Caco-2 (cell line): ENCODE measurements at regions of chr17 and their contacts with region 1.

Region 1: GRCh38 chr17:48259694-48260291 is 152.2 kb downstream of the SNX11 start:
- DNase-seq: peak in 1 of 2 experiments; percentile 70
- H3K4me3 ChIP-seq: no peak overlapping the region
- H3K4me3 Mint-ChIP-seq: no peak overlapping the region
- H3K27ac Mint-ChIP-seq: no peak overlapping the region
- H3K4me1 ChIP-seq: peaks cover 33% of the 10 kb centered on the region
- H3K4me1 Mint-ChIP-seq: peaks cover 34% of the 10 kb centered on the region
- H3K27me3 ChIP-seq: no peaks in the 10 kb centered on the region
- H3K27me3 Mint-ChIP-seq: no peaks in the 10 kb centered on the region
- CTCF ChIP-seq: peak; percentile 95 to 97

Region 2: DNA sequence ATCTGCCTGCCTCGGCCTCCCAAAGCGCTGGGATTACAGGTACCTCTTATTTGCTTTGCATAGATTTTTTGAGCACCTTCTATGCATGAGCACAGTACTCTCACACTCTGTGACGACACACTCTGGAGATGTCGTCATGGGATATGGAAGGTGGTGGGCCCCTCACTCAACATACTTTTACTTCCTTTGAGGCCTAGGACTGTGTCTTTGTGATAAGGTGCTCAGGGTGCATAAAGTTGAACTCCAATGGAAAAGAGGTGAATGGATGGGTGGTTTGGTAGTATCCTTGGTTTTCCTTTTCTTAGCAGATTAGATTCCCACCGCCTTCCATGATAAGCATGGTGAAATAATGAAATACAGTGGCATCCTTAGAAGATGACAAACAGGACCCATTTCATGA is 294.9 kb before region 1 on chr17:
- CTCF ChIA-PET with region 1: no interaction called
- POLR2A ChIA-PET with region 1: no interaction called
- intact Hi-C with region 1: no loop called
- DNase-seq: no peak
- H3K4me3 ChIP-seq: no peak overlapping the region
- H3K4me3 Mint-ChIP-seq: no peak overlapping the region
- H3K27ac Mint-ChIP-seq: peak overlapping the region; percentile 73
- H3K4me1 ChIP-seq: peaks cover 72% of the 10 kb centered on the region
- H3K4me1 Mint-ChIP-seq: peaks cover 48% of the 10 kb centered on the region
- H3K27me3 ChIP-seq: no peaks in the 10 kb centered on the region
- H3K27me3 Mint-ChIP-seq: no peaks in the 10 kb centered on the region
- CTCF ChIP-seq: no peak

Region 3: DNA sequence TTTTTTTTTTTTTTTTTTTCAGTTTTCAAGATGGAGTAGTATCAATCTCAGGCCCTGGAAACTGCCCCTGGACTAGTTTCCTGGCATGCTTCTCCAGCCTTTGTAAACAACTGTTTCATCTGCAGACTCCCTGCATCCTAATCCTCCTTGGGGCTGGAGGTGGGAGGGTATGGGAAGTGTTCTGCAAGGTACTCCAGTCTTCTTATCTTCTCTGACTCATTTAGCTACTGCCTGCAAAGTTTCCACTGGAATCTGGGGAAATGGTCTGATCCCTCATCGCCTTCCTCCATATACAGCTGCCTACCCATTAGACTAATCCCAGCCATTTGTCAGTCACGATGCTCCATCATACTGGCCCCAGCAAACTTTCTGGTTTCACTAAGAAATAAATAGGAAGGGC is 243.7 kb before region 1 on chr17:
- CTCF ChIA-PET with region 1: no interaction called
- POLR2A ChIA-PET with region 1: no interaction called
- intact Hi-C with region 1: no loop called
- DNase-seq: no peak
- H3K4me3 ChIP-seq: no peak overlapping the region
- H3K4me3 Mint-ChIP-seq: no peak overlapping the region
- H3K27ac Mint-ChIP-seq: no peak overlapping the region
- H3K4me1 ChIP-seq: no peaks in the 10 kb centered on the region
- H3K4me1 Mint-ChIP-seq: no peaks in the 10 kb centered on the region
- H3K27me3 ChIP-seq: no peaks in the 10 kb centered on the region
- H3K27me3 Mint-ChIP-seq: peaks cover 7% of the 10 kb centered on the region
- CTCF ChIP-seq: no peak

Region 4: GRCh38 chr17:48181653-48182052 is 78.1 kb before region 1 on chr17:
- CTCF ChIA-PET with region 1: interaction called, 5 read pairs
- POLR2A ChIA-PET with region 1: no interaction called
- intact Hi-C with region 1: loop called (anchors 1 kb)
- DNase-seq: peak; percentile 67 to 76
- H3K4me3 ChIP-seq: no peak overlapping the region
- H3K4me3 Mint-ChIP-seq: no peak overlapping the region
- H3K27ac Mint-ChIP-seq: no peak overlapping the region
- H3K4me1 ChIP-seq: no peaks in the 10 kb centered on the region
- H3K4me1 Mint-ChIP-seq: no peaks in the 10 kb centered on the region
- H3K27me3 ChIP-seq: 0 out of 2 replicates have a peak, but pooled peaks cover 2% of the 10 kb centered on the region
- H3K27me3 Mint-ChIP-seq: peaks cover 18% of the 10 kb centered on the region
- CTCF ChIP-seq: peak; percentile 77 to 95

Region 5: DNA sequence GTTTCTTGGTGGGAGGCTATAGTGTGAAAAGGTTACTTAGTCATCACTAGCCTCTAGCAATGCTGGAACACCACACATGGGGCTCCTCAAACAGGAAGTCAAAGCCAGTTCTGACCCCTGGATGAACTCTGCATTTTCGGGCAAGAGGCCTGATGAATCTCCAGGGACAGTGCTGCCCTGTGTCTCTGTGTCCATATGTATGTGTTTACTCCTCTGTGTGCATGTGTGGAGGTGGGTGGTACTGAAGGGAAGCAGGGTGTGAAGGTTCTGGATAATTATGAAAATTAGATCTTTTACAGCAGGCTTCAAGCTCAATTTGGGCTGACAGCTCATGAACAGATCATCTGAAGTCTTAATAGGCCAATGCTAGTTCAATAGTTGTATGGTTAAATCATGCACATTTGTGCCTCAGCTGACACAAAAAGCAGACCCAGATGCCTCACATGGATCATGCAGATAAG is 18.6 kb before region 1 on chr17:
- CTCF ChIA-PET with region 1: interaction called, 88 read pairs
- POLR2A ChIA-PET with region 1: interaction called, 3 read pairs
- intact Hi-C with region 1: loop called (anchors 1 kb)
- DNase-seq: peak in 1 of 2 experiments; percentile 68
- H3K4me3 ChIP-seq: no peak overlapping the region
- H3K4me3 Mint-ChIP-seq: no peak overlapping the region
- H3K27ac Mint-ChIP-seq: no peak overlapping the region
- H3K4me1 ChIP-seq: peaks cover 63% of the 10 kb centered on the region
- H3K4me1 Mint-ChIP-seq: peaks cover 57% of the 10 kb centered on the region
- H3K27me3 ChIP-seq: no peaks in the 10 kb centered on the region
- H3K27me3 Mint-ChIP-seq: no peaks in the 10 kb centered on the region
- CTCF ChIP-seq: no peak

Region 6: GRCh38 chr17:48307814-48308411 is 48.1 kb after region 1 on chr17:
- CTCF ChIA-PET with region 1: interaction called, 19 read pairs
- POLR2A ChIA-PET with region 1: no interaction called
- intact Hi-C with region 1: loop called (anchors 5 kb)
- DNase-seq: peak; percentile 83
- H3K4me3 ChIP-seq: no peak overlapping the region
- H3K4me3 Mint-ChIP-seq: no peak overlapping the region
- H3K27ac Mint-ChIP-seq: no peak overlapping the region
- H3K4me1 ChIP-seq: peaks cover 15% of the 10 kb centered on the region
- H3K4me1 Mint-ChIP-seq: peaks cover 14% of the 10 kb centered on the region
- H3K27me3 ChIP-seq: no peaks in the 10 kb centered on the region
- H3K27me3 Mint-ChIP-seq: peaks cover 16% of the 10 kb centered on the region
- CTCF ChIP-seq: peak; percentile 99 to 100

Region 7: DNA sequence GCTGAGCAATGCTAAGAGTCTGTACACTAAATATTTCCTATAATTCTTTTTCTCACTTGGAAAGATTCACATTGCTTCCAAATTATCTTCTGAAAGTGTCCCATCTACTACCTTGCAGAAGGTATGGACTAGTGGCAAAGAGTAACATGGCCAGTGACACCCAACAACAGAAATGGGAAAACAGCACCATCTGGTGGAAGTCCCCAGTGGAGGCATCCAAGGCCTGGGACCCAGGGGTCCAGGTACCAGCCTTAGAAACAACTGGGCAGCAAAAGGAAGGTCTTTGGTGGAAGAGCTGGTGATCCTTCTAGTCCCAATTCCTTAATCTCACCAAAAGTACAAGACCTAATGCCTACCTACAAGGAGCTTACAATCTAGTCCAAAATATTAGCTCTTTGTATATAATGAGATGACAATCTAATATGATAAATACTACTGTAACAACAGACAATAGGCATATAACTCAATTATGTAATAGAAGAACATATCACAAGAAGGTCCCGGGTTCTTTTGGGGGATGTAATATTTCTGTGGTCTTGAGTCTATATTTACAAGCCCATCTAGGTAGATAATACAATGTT is 114.9 kb after region 1 on chr17:
- CTCF ChIA-PET with region 1: interaction called, 4 read pairs
- POLR2A ChIA-PET with region 1: no interaction called
- intact Hi-C with region 1: loop called (anchors 2 kb)
- DNase-seq: peak; percentile 81 to 88
- H3K4me3 ChIP-seq: no peak overlapping the region
- H3K4me3 Mint-ChIP-seq: no peak overlapping the region
- H3K27ac Mint-ChIP-seq: no peak overlapping the region
- H3K4me1 ChIP-seq: no peaks in the 10 kb centered on the region
- H3K4me1 Mint-ChIP-seq: no peaks in the 10 kb centered on the region
- H3K27me3 ChIP-seq: no peaks in the 10 kb centered on the region; the same call in 1 of the 2 replicates
- H3K27me3 Mint-ChIP-seq: peaks cover 2% of the 10 kb centered on the region
- CTCF ChIP-seq: peak; percentile 98

Region 8: DNA sequence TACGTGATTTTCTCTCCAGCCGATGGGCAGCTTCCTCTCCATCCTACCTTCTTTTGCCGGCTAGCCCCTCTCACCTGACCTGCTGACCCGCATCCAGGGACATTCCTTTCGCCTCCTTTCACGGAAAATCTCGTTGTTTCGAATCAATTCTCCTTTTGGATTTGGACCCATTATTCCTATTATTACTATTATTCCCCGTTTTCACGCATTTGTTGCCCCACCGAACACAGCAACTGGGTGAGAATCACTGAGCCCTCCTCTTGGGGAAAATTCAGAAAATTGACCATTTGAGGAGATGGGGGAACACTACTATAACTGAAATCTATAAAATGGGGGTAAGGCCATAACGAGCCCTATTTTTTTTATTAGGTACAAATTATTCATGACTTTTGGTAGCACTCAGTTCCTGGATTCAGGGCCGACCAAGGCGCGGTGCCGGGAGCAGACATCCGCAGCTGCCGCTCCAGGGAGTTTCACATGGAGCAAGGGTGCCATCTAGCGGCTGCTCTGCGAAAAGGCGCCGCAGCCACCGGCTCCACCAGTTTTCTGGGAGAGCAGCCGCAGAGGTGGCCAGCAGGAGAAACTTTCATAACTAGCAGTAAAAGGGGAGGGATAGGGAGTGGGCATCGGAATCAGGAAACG is 358.6 kb after region 1 on chr17:
- CTCF ChIA-PET with region 1: interaction called, 8 read pairs
- POLR2A ChIA-PET with region 1: no interaction called
- intact Hi-C with region 1: loop called (anchors 2 kb)
- DNase-seq: peak; percentile 93 to 98
- H3K4me3 ChIP-seq: peak overlapping the region; percentile 33
- H3K4me3 Mint-ChIP-seq: peak overlapping the region; percentile 63
- H3K27ac Mint-ChIP-seq: peak overlapping the region; percentile 59
- H3K4me1 ChIP-seq: peaks cover 4% of the 10 kb centered on the region
- H3K4me1 Mint-ChIP-seq: peaks cover 33% of the 10 kb centered on the region
- H3K27me3 ChIP-seq: peaks cover 27% of the 10 kb centered on the region
- H3K27me3 Mint-ChIP-seq: peaks cover 69% of the 10 kb centered on the region
- CTCF ChIP-seq: peak; percentile 100